H1 (cell line): ENCODE measurements at regions of chr20 and their contacts with region 1.

Region 1: GRCh38 chr20:3146732-3147341 is 12.8 kb downstream of the FASTKD5 start:
- DNase-seq: no peak
- H3K4me3 ChIP-seq: no peak overlapping the region
- H3K27ac ChIP-seq: no peak overlapping the region
- H3K4me1 ChIP-seq: no peaks in the 10 kb centered on the region
- H3K27me3 ChIP-seq: no peaks in the 10 kb centered on the region
- CTCF ChIP-seq: no peak
- EP300 ChIP-seq: no peak
- POLR2A ChIP-seq: no peak
- RAD21 ChIP-seq: no peak

Region 2: GRCh38 chr20:3059489-3059888 is 87.3 kb before region 1 on chr20:
- CTCF ChIA-PET with region 1: no interaction called
- POLR2A ChIA-PET with region 1: no interaction called
- DNase-seq: no peak
- H3K4me3 ChIP-seq: no peak overlapping the region
- H3K27ac ChIP-seq: no peak overlapping the region
- H3K4me1 ChIP-seq: no peaks in the 10 kb centered on the region
- H3K27me3 ChIP-seq: no peaks in the 10 kb centered on the region
- CTCF ChIP-seq: no peak
- EP300 ChIP-seq: no peak
- POLR2A ChIP-seq: no peak
- RAD21 ChIP-seq: no peak

Region 3: DNA sequence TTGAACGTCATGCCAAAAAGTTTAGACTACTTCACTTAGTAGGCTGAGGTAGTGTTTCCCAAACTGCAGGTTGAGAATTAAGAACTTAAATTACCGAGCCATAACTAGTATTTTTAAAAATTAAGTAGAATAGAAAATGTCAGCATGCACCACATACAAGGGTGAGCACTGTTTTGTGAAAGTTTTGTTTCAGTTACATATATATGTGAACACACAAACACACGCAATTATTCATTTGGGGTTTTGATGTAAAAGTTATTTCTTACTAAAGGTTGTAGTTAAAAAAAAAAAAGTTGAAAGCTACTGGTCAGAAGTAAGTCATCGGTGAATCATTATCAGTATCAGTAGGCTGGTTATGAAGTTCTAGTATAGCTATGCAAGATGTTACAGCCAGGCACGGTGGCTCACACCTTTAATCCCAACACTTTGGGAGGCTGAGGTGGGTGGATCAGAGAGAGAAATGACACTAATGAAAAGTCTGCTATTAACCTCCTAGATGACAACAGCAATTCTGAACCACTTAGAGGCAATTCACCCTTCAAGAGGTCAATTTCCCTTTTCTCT is 11.2 kb before region 1 on chr20:
- CTCF ChIA-PET with region 1: interaction called, 11 read pairs
- POLR2A ChIA-PET with region 1: interaction called, 3 read pairs
- DNase-seq: no peak
- H3K4me3 ChIP-seq: no peak overlapping the region
- H3K27ac ChIP-seq: no peak overlapping the region
- H3K4me1 ChIP-seq: no peaks in the 10 kb centered on the region
- H3K27me3 ChIP-seq: no peaks in the 10 kb centered on the region
- CTCF ChIP-seq: no peak
- EP300 ChIP-seq: no peak
- POLR2A ChIP-seq: no peak
- RAD21 ChIP-seq: no peak

Region 4: GRCh38 chr20:3276680-3277015 is 129.8 kb after region 1 on chr20:
- CTCF ChIA-PET with region 1: no interaction called
- POLR2A ChIA-PET with region 1: no interaction called
- DNase-seq: no peak
- H3K4me3 ChIP-seq: no peak overlapping the region
- H3K27ac ChIP-seq: no peak overlapping the region
- H3K4me1 ChIP-seq: no peaks in the 10 kb centered on the region
- H3K27me3 ChIP-seq: no peaks in the 10 kb centered on the region
- CTCF ChIP-seq: peak; percentile 33 to 74 (median 67)
- EP300 ChIP-seq: no peak
- POLR2A ChIP-seq: no peak
- RAD21 ChIP-seq: peak; percentile 66 to 80